WTC11 (cell line): ENCODE measurements at regions of chrX and their contacts with region 1.

Region 1: DNA sequence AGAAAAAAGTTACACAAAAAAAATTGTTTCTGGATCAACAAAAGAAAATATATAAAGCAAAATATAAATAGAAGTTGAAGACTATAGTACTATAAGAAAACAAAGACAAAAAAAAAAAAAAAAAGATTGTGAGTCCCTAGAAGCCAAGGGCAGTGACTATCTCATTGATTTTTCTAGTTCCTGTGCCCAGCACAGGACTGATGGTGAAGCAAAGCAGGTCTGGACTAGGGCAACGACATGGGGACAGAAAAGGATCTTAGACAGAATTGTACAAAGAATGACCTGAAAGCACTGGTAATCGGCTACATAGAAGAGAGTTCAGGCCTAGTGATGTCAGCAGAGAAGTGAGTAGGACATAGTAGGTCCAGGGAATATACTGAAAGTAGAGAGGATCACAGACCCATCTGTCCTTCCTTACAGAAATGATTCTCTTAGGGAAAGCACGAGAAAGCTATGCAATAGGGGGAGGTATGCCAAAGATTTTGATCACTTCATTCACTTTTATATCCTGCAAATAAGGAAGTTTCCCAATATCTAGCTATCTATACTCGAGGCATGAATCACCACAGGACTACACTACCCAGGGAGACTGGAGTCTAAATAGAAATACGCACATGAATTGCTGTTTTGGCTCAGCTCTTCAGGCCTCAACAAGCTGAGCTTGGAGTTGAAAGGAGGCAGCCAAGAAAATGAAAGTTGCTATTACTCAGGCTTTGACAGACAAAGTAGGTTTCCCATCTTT is 230.9 kb upstream of the GPC4 start:
- DNase-seq: no peak
- ATAC-seq: no peak
- H3K4me3 Mint-ChIP-seq: no peak overlapping the region
- H3K27ac Mint-ChIP-seq: no peak overlapping the region; the same call in 1 of the 2 replicates
- H3K4me1 Mint-ChIP-seq: peaks cover 58% of the 10 kb centered on the region
- H3K27me3 Mint-ChIP-seq: no peaks in the 10 kb centered on the region
- CTCF ChIP-seq: no peak

Region 2: DNA sequence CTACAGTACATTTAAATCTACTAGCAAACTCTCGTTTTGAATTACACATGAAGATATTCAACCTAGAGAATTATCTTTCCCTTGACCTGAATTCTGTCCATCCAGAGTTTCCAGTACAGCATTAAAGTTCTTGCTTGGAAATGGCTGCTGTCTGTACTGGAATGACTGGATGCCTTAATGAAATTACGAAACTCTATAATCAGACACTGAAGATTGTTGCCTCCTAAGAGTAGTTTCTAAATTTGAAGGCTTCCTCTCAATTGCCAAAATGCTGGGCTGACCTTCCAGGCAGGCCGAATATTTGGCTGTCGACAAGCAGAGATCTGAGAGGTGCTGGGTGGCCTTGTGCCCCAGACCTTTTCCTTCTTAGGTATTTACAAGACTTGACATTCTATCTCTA is 15.8 kb before region 1 on chrX:
- CTCF ChIA-PET with region 1: no interaction called
- POLR2A ChIA-PET with region 1: interaction called, 10 read pairs
- DNase-seq: no peak
- ATAC-seq: peak; percentile 68
- H3K4me3 Mint-ChIP-seq: 0 out of 2 replicates have a peak overlapping the region, but pooled peaks have one; percentile 4
- H3K27ac Mint-ChIP-seq: peak overlapping the region; percentile 80
- H3K4me1 Mint-ChIP-seq: peaks cover 43% of the 10 kb centered on the region
- H3K27me3 Mint-ChIP-seq: no peaks in the 10 kb centered on the region
- CTCF ChIP-seq: no peak

Region 3: DNA sequence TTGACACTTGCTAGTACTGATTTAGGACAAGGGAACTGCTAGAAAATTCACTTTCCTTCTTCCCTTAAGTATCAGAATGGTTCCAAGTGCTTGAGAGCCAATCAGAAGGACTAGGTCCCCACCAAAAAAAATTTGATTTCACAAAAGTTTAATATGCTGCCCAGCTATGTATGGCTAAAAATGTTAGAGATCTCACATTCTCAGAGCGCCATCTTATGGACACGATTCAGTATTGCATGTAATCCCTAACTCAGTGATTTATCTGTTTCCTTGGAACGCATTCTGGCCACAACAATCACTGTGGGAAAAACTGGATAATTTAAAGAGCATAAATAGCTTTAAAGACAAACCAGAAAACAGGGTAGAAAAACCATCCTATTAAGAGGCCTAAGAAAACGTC is 24.2 kb after region 1 on chrX:
- CTCF ChIA-PET with region 1: interaction called, 10 read pairs
- POLR2A ChIA-PET with region 1: no interaction called
- DNase-seq: no peak
- ATAC-seq: no peak; the same call in 1 of the 2 replicates
- H3K4me3 Mint-ChIP-seq: no peak overlapping the region
- H3K27ac Mint-ChIP-seq: no peak overlapping the region
- H3K4me1 Mint-ChIP-seq: peaks cover 57% of the 10 kb centered on the region
- H3K27me3 Mint-ChIP-seq: no peaks in the 10 kb centered on the region
- CTCF ChIP-seq: peak; percentile 36; the same call in 1 of the 2 replicates